A673 (cell line): ENCODE measurements at regions of chr9 and their contacts with region 1.

Region 1: DNA sequence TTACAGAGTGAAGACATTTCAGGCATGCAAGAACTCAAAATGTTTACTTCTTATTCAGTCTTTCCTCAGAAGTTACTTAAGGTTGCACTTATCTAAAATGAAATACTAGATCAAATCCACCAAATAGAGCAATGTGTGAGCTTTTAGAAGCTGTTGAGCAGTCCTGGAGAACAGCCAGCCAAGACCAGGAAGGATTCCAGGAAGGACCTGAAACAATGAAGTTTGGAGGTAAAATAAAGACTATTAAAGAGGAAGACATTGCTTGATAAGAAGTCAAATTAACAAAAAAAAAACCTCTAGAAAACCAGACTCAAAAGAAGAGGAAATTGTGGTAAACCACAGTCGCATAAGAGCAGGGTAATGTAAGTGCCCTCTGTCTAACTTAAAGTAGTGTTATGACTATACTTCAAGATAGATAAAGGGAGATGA is 156.2 kb upstream of the S1PR3 start:
- DNase-seq: peak; percentile 82
- H3K4me3 ChIP-seq: no peak overlapping the region
- H3K27ac ChIP-seq: peak overlapping the region; percentile 94
- H3K4me1 ChIP-seq: peaks cover 45% of the 10 kb centered on the region
- H3K27me3 ChIP-seq: no peaks in the 10 kb centered on the region
- CTCF ChIP-seq: no peak

Region 2: DNA sequence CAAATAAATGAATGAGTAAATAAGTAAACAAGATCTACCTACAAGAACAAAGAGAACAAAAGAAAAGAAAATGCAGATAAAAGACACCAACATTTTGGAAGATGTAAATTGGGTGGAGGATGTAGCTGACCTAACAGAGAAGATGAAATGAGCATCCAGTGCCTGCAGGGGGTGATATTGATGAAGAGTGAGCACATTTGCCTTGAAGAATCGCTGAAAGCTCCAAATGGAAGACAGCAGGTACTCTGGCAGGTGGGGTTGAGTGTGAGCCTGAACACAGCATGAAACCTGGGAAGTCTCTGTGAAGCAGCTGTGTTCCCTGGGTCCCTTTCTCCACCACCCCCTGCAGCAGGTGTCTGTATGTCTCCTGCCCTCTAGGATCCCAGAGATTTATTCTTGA is 174.4 kb before region 1 on chr9:
- CTCF ChIA-PET with region 1: no interaction called
- POLR2A ChIA-PET with region 1: no interaction called
- intact Hi-C with region 1: loop called (anchors 10 kb)
- DNase-seq: peak; percentile 75
- H3K4me3 ChIP-seq: no peak overlapping the region
- H3K27ac ChIP-seq: no peak overlapping the region
- H3K4me1 ChIP-seq: peaks cover 14% of the 10 kb centered on the region
- H3K27me3 ChIP-seq: no peaks in the 10 kb centered on the region
- CTCF ChIP-seq: peak; percentile 73

Region 3: GRCh38 chr9:88747768-88748167 is 87.3 kb before region 1 on chr9:
- CTCF ChIA-PET with region 1: no interaction called
- POLR2A ChIA-PET with region 1: no interaction called
- intact Hi-C with region 1: no loop called
- DNase-seq: peak; percentile 92
- H3K4me3 ChIP-seq: no peak overlapping the region
- H3K27ac ChIP-seq: peak overlapping the region; percentile 78
- H3K4me1 ChIP-seq: peaks cover 56% of the 10 kb centered on the region
- H3K27me3 ChIP-seq: no peaks in the 10 kb centered on the region
- CTCF ChIP-seq: no peak

Region 4: GRCh38 chr9:88791105-88791805 is 43.8 kb before region 1 on chr9:
- CTCF ChIA-PET with region 1: no interaction called
- POLR2A ChIA-PET with region 1: no interaction called
- intact Hi-C with region 1: loop called (anchors 5 kb)
- DNase-seq: peak; percentile 75
- H3K4me3 ChIP-seq: no peak overlapping the region
- H3K27ac ChIP-seq: peak overlapping the region; percentile 39
- H3K4me1 ChIP-seq: peaks cover 45% of the 10 kb centered on the region
- H3K27me3 ChIP-seq: no peaks in the 10 kb centered on the region
- CTCF ChIP-seq: no peak

Region 5: GRCh38 chr9:88889386-88889785 is 54.3 kb after region 1 on chr9:
- CTCF ChIA-PET with region 1: no interaction called
- POLR2A ChIA-PET with region 1: no interaction called
- intact Hi-C with region 1: no loop called
- DNase-seq: no peak
- H3K4me3 ChIP-seq: no peak overlapping the region
- H3K27ac ChIP-seq: no peak overlapping the region
- H3K4me1 ChIP-seq: no peaks in the 10 kb centered on the region
- H3K27me3 ChIP-seq: no peaks in the 10 kb centered on the region
- CTCF ChIP-seq: no peak